ENCODE measurements at regions of chr7 and their contacts with region 1.

Region 1: DNA sequence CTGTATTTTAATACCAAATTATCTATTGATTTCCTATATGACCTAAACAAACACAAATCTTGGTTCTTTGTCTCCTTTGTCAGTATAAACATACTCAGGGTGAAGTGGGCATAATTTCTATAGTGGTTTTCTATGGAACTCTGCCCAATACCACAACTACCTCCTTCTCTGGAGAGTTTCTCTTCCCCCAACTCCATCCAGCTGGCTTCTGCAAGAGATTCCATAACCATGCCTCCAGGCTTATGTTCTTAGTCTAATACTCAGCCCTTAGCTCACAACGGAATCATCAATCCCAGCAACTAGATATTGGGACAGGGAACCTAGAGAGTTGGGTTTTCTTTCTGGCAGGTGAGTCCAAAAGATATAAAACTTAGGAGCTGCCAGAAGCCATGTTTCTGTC is 127.3 kb downstream of the TRIL start:
- DNase-seq: no peak
- H3K4me3 ChIP-seq: no peak overlapping the region
- H3K27ac ChIP-seq: no peak overlapping the region
- H3K4me1 ChIP-seq: no peaks in the 10 kb centered on the region
- H3K27me3 ChIP-seq: no peaks in the 10 kb centered on the region
- CTCF ChIP-seq: no peak
- EP300 ChIP-seq: no peak
- POLR2A ChIP-seq: no peak
- RAD21 ChIP-seq: no peak

Region 2: GRCh38 chr7:28808796-28809527 is 21.9 kb before region 1 on chr7:
- CTCF ChIA-PET with region 1: interaction called, 10 read pairs
- POLR2A ChIA-PET with region 1: no interaction called
- DNase-seq: peak in 1 of 2 experiments; percentile 72
- H3K4me3 ChIP-seq: no peak overlapping the region
- H3K27ac ChIP-seq: no peak overlapping the region
- H3K4me1 ChIP-seq: no peaks in the 10 kb centered on the region
- H3K27me3 ChIP-seq: no peaks in the 10 kb centered on the region; a peak in 1 of 7 replicates
- CTCF ChIP-seq: peak; percentile 51 to 61 (median 52)
- EP300 ChIP-seq: no peak
- POLR2A ChIP-seq: no peak
- RAD21 ChIP-seq: peak; percentile 41 to 56; a peak in 3 of 4 replicates

Measured in H1 (cell line).